IMR-90 (cell line): ENCODE measurements at regions of chr2 and their contacts with region 1.

Region 1: DNA sequence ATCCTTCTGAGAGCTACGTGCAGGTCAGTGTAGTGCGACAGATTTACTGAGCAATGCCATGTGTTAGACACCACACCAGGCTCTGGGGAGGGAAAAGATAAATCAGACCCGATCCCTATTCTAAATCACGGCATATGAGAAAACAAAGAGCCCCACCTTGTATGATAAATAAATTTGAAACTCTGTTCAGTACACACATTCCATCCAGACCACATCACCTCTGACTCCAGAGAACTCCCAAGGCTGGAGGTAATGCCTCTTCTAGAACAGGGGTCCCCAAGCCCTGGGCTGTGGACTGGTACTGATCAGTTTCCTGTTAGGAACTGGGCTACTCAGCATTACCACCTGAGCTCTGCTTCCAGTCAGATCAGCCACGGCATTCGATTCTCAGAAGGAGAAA is 77.3 kb downstream of the QPCT start:
- DNase-seq: no peak
- ATAC-seq: peak; percentile 47
- H3K4me3 ChIP-seq: no peak overlapping the region
- H3K27ac ChIP-seq: no peak overlapping the region
- H3K4me1 ChIP-seq: peaks cover 18% of the 10 kb centered on the region
- H3K27me3 ChIP-seq: no peaks in the 10 kb centered on the region
- CTCF ChIP-seq: no peak
- POLR2A ChIP-seq: no peak
- RAD21 ChIP-seq: no peak

Region 2: GRCh38 chr2:37168217-37168981 is 253.3 kb before region 1 on chr2:
- CTCF ChIA-PET with region 1: no interaction called
- POLR2A ChIA-PET with region 1: no interaction called
- dilution Hi-C with region 1: no loop called
- in situ Hi-C with region 1: no loop called
- intact Hi-C with region 1: no loop called
- DNase-seq: peak; percentile 55
- ATAC-seq: peak; percentile 97
- H3K4me3 ChIP-seq: no peak overlapping the region
- H3K27ac ChIP-seq: no peak overlapping the region
- H3K4me1 ChIP-seq: 0 out of 2 replicates have a peak, but pooled peaks cover 2% of the 10 kb centered on the region
- H3K27me3 ChIP-seq: no peaks in the 10 kb centered on the region
- CTCF ChIP-seq: peak; percentile 70
- POLR2A ChIP-seq: no peak
- RAD21 ChIP-seq: peak; percentile 73

Region 3: DNA sequence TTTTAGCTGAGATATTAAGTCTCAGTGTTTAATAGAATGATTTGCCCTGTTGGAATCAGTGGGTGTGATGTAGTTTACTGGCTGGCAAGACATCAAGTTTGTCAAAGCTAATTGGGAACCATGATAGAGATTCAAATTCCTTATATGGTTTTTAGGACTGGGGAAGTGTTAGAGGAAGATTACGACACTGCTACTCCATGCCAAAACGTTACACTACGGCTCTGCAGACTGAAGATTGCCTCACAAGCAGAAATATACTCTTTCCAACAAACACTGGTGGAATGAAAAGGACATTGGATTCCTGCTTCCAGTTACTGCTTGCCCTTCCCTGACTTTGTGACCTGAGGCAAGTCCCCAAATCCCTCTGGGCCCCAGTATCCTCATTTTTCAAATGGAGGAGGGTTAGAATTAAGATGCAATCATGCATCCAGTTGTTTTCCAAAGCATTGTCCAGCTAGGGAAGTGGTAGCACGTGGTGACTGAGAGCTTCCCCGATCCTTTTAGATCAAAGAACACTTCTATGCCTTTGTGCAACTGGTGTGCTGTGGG is 102.2 kb after region 1 on chr2:
- CTCF ChIA-PET with region 1: no interaction called
- POLR2A ChIA-PET with region 1: no interaction called
- dilution Hi-C with region 1: no loop called
- in situ Hi-C with region 1: no loop called
- intact Hi-C with region 1: loop called (anchors 5 kb)
- DNase-seq: peak; percentile 82
- ATAC-seq: peak; percentile 86
- H3K4me3 ChIP-seq: no peak overlapping the region
- H3K27ac ChIP-seq: peak overlapping the region; percentile 2; the same call in 1 of the 2 replicates
- H3K4me1 ChIP-seq: peaks cover 10% of the 10 kb centered on the region
- H3K27me3 ChIP-seq: no peaks in the 10 kb centered on the region
- CTCF ChIP-seq: no peak
- POLR2A ChIP-seq: no peak
- RAD21 ChIP-seq: no peak